ENCODE measurements at regions of chr17 and their contacts with region 1.

Region 1: GRCh38 chr17:68512247-68512982 is at the start of gene PRKAR1A:
- DNase-seq: peak; percentile 96
- ATAC-seq: peak; percentile 85
- H3K4me3 Mint-ChIP-seq: peak within 1 kb of the TSS; percentile 94
- H3K27ac Mint-ChIP-seq: peak within 1 kb of the TSS; percentile 99
- H3K4me1 Mint-ChIP-seq: peaks cover 61% of the 10 kb centered on the region
- H3K27me3 Mint-ChIP-seq: no peaks in the 10 kb centered on the region
- total RNA-seq, gene PRKAR1A: 210 to 221 TPM

Region 2: GRCh38 chr17:68491381-68492231 is 20.8 kb before region 1 on chr17:
- CTCF ChIA-PET with region 1: interaction called, 8 read pairs
- POLR2A ChIA-PET with region 1: interaction called, 16 read pairs
- DNase-seq: no peak
- ATAC-seq: no peak
- H3K4me3 Mint-ChIP-seq: no peak overlapping the region
- H3K27ac Mint-ChIP-seq: no peak overlapping the region
- H3K4me1 Mint-ChIP-seq: peaks cover 38% of the 10 kb centered on the region
- H3K27me3 Mint-ChIP-seq: peaks cover 3% of the 10 kb centered on the region

Region 3: DNA sequence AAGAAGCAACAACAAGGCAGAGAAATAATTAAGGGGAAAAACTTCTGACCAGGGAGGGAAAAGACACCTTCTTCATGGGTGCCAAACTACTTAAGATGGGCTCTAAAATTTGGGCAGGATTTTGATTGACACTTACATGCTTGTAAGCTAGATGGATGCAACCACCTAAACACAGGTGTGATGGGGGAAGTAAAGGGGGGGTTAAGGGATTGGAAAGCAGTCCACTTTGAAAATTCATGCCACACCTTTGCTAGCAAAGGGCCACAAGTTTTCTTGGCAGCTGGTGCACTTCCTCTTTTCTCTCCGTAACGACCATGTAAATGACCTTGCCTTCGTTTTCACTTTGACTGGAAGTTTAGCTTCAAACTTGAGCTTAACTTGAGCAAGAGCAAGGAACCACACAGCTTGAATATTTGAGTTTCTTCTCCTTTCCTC is 14.5 kb before region 1 on chr17:
- CTCF ChIA-PET with region 1: interaction called, 8 read pairs
- POLR2A ChIA-PET with region 1: interaction called, 15 read pairs
- DNase-seq: peak; percentile 33
- ATAC-seq: peak; percentile 50
- H3K4me3 Mint-ChIP-seq: peak overlapping the region; percentile 26
- H3K27ac Mint-ChIP-seq: peak overlapping the region; percentile 84
- H3K4me1 Mint-ChIP-seq: peaks cover 42% of the 10 kb centered on the region
- H3K27me3 Mint-ChIP-seq: peaks cover 6% of the 10 kb centered on the region